Caco-2 (cell line): ENCODE measurements at regions of chr12 and their contacts with region 1.

Region 1: GRCh38 chr12:42568952-42569915 is 20.3 kb downstream of the PRICKLE1 start:
- DNase-seq: peak in 1 of 2 experiments; percentile 56
- H3K4me3 ChIP-seq: no peak overlapping the region
- H3K4me3 Mint-ChIP-seq: no peak overlapping the region
- H3K27ac Mint-ChIP-seq: no peak overlapping the region
- H3K4me1 ChIP-seq: peaks cover 17% of the 10 kb centered on the region
- H3K4me1 Mint-ChIP-seq: peaks cover 7% of the 10 kb centered on the region
- H3K27me3 ChIP-seq: no peaks in the 10 kb centered on the region
- H3K27me3 Mint-ChIP-seq: no peaks in the 10 kb centered on the region
- CTCF ChIP-seq: peak; percentile 47 to 63

Region 2: DNA sequence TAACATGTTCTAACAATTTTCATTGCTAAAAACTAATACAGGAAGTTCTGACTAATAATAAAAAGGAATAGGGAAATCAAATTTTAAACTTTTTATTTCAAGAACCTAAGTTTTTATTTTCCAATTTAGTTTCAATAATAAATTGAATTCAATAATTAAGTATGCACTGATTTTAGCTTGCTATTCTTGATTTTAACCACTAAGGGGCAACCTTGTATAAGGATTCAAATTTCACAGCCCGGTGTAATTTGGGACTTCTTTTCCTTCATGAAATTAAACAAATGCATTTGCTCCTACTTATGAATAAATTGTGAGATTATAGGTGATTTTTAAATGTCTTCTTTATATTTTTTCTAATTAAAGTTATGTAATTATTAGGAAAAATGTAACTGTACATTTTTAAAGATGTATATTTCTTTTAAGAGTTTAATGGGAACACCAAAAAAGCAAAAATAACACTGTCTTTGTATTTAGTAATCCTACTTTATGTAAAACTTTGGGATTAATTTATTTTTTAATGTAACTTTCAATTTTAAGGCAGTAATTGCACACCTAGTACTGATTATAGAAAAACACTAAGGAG is 1622.5 kb before region 1 on chr12:
- CTCF ChIA-PET with region 1: no interaction called
- POLR2A ChIA-PET with region 1: no interaction called
- intact Hi-C with region 1: loop called (anchors 5 kb)
- DNase-seq: no peak
- H3K4me3 ChIP-seq: no peak overlapping the region
- H3K4me3 Mint-ChIP-seq: no peak overlapping the region
- H3K27ac Mint-ChIP-seq: no peak overlapping the region
- H3K4me1 ChIP-seq: no peaks in the 10 kb centered on the region
- H3K4me1 Mint-ChIP-seq: no peaks in the 10 kb centered on the region
- H3K27me3 ChIP-seq: no peaks in the 10 kb centered on the region
- H3K27me3 Mint-ChIP-seq: no peaks in the 10 kb centered on the region
- CTCF ChIP-seq: peak; percentile 46 to 58

Region 3: DNA sequence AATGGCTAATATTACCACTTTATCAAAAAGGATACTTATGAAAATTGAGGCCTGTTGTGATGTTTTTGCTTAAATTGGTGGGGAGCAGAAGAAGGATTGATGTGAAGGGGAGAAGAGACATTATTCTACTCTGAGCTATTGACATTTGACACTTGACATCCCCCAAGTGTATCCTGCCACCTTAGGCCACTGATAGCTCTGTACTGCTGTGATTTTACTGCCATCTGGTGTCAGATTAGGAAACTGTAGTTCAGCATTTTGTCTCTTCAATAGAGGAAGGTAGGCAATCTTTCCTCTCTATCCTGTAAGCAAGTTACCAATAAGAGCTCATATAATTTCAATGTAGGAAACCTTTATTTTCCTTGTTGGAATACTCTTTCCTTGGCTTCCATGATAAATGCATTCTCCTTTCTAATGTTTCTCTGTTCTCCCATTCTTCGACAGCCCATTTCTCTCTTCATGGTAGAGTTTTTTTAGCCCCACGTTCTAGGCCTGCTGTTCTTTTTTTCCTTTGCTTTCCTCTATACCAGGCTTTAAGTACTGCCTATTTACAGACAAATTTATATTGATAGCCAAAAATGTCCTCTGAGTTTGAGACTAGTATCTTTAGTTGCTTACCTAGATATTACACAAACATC is 197.0 kb before region 1 on chr12:
- CTCF ChIA-PET with region 1: no interaction called
- POLR2A ChIA-PET with region 1: no interaction called
- intact Hi-C with region 1: loop called (anchors 1 kb)
- DNase-seq: peak in 1 of 2 experiments; percentile 70
- H3K4me3 ChIP-seq: no peak overlapping the region
- H3K4me3 Mint-ChIP-seq: no peak overlapping the region
- H3K27ac Mint-ChIP-seq: no peak overlapping the region
- H3K4me1 ChIP-seq: no peaks in the 10 kb centered on the region
- H3K4me1 Mint-ChIP-seq: peaks cover 16% of the 10 kb centered on the region
- H3K27me3 ChIP-seq: no peaks in the 10 kb centered on the region
- H3K27me3 Mint-ChIP-seq: no peaks in the 10 kb centered on the region
- CTCF ChIP-seq: peak; percentile 81 to 85

Region 4: GRCh38 chr12:42482445-42483237 is 86.6 kb before region 1 on chr12:
- CTCF ChIA-PET with region 1: interaction called, 58 read pairs
- POLR2A ChIA-PET with region 1: interaction called, 3 read pairs
- intact Hi-C with region 1: loop called (anchors 1 kb)
- DNase-seq: peak; percentile 72 to 90
- H3K4me3 ChIP-seq: peak overlapping the region; percentile 54
- H3K4me3 Mint-ChIP-seq: peak overlapping the region; percentile 92
- H3K27ac Mint-ChIP-seq: no peak overlapping the region
- H3K4me1 ChIP-seq: peaks cover 6% of the 10 kb centered on the region; the same call in 1 of the 2 replicates
- H3K4me1 Mint-ChIP-seq: no peaks in the 10 kb centered on the region
- H3K27me3 ChIP-seq: no peaks in the 10 kb centered on the region
- H3K27me3 Mint-ChIP-seq: no peaks in the 10 kb centered on the region
- CTCF ChIP-seq: peak; percentile 82 to 89

Region 5: DNA sequence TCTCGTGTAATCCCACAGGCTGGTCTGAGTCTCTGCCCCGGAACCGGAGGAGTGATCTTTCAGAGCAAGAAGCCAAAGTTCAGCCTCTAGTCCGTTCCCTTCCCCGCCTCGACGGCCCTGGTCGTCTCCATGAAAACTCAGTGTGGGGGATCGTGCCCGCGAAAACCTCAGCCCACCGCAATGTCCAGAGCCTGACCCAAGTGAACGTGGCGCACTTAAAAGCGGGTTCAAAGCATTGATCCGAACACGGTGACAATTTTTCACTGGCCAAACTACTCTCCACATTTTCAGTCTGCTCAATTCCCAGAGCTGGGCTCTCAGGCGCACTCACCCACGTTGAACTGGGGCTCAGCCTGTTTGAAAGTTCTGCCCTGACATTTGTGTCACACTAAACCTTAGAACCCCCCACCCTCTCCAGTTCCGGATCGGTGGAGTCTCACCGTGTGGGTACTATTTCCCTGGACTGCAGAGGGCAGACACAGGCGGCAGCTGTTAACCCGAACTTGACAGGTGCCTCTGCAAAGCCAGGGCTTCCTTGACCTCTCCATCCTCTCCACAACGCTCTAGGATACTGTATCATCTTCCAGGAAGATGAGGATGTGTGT is 21.2 kb after region 1 on chr12:
- CTCF ChIA-PET with region 1: no interaction called
- POLR2A ChIA-PET with region 1: no interaction called
- intact Hi-C with region 1: no loop called
- DNase-seq: peak; percentile 29 to 46
- H3K4me3 ChIP-seq: peak overlapping the region; percentile 47
- H3K4me3 Mint-ChIP-seq: peak overlapping the region; percentile 74
- H3K27ac Mint-ChIP-seq: no peak overlapping the region
- H3K4me1 ChIP-seq: peaks cover 28% of the 10 kb centered on the region
- H3K4me1 Mint-ChIP-seq: peaks cover 26% of the 10 kb centered on the region
- H3K27me3 ChIP-seq: peaks cover 9% of the 10 kb centered on the region
- H3K27me3 Mint-ChIP-seq: peaks cover 4% of the 10 kb centered on the region
- CTCF ChIP-seq: no peak

Region 6: DNA sequence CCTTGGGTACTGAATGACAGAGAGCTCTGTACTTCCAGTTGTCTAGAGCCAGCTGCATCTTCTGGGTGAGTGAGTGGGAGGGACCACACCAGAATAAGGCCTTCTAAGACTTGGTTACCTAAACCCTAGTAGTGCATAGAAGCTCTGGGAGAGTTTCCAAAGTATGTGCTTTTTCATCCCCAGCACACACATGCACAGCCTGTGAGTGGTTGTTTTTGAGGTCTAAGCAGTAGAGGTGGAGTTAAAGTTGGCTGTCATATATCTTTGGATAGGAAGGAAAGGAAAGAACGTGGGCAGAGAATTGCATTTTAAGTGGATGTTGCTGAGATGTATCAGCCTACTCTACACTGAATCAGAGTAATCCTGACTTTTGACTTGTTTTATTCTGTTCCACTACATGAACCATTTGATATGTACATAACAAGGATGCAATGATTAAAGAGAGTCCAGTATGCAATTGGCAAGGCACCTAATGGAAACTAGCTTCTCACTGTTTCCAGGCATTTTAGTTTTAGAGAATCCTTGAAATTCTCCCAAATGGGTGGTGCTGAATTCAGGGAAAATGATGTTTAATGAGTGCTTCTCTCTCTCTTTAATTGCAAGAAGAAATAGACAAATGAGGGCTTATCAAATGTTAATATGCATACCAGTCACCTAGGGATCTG is 72.1 kb after region 1 on chr12:
- CTCF ChIA-PET with region 1: no interaction called
- POLR2A ChIA-PET with region 1: no interaction called
- intact Hi-C with region 1: no loop called
- DNase-seq: no peak
- H3K4me3 ChIP-seq: no peak overlapping the region
- H3K4me3 Mint-ChIP-seq: no peak overlapping the region
- H3K27ac Mint-ChIP-seq: no peak overlapping the region
- H3K4me1 ChIP-seq: peaks cover 12% of the 10 kb centered on the region
- H3K4me1 Mint-ChIP-seq: no peaks in the 10 kb centered on the region
- H3K27me3 ChIP-seq: no peaks in the 10 kb centered on the region
- H3K27me3 Mint-ChIP-seq: no peaks in the 10 kb centered on the region
- CTCF ChIP-seq: no peak

Region 7: DNA sequence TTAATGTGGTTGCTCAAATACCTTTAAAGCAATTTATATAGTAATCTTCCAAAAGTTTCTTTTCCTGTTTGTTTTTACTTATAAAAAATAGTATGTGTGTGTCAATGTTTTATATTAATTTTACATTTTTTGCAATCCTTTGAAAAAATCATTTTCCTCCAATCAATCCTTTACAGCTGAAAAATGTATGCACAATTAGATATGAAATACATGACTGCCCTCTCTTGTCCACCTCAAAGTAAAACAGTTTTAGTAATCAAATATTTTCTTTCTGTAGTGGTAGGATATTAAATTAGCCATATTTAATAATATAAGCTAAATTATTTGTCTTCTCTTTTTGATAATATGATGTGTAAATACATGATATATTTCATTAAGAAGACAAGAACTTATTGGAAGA is 712.9 kb after region 1 on chr12:
- CTCF ChIA-PET with region 1: no interaction called
- POLR2A ChIA-PET with region 1: no interaction called
- intact Hi-C with region 1: loop called (anchors 5 kb)
- DNase-seq: no peak
- H3K4me3 ChIP-seq: no peak overlapping the region
- H3K4me3 Mint-ChIP-seq: no peak overlapping the region
- H3K27ac Mint-ChIP-seq: no peak overlapping the region
- H3K4me1 ChIP-seq: no peaks in the 10 kb centered on the region
- H3K4me1 Mint-ChIP-seq: peaks cover 10% of the 10 kb centered on the region
- H3K27me3 ChIP-seq: no peaks in the 10 kb centered on the region
- H3K27me3 Mint-ChIP-seq: no peaks in the 10 kb centered on the region
- CTCF ChIP-seq: no peak

Region 8: DNA sequence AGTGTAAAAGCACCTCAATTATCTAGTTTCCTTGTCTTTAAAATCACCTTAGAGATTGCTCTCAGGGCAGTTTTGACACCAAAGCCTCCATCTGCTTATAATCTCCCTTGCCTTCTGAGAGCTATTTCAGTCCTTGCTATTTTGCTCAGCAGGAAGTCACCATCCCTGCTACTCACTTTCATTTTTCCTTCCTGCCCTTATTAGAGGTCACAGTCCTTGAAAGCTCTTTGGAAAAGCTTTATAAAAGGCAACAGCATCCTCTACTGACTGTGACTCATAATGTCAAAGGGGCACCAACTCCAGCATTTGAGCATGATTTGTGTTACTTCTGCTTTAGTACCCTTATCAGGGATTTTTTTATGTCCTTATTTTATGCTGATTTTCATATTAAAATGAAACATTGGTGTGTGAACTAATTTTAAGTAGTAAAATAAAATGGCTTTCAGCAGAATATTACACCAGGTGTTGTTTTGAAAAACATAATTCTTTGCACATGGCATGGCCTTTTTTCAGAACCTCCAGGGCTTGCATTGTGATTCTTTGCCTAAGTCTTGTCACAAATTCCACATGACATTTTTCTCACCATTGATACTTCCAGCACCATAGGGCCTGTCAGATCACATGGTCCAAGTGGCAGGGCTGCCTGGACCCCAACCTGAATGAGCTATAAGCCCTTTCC is 769.8 kb after region 1 on chr12:
- CTCF ChIA-PET with region 1: no interaction called
- POLR2A ChIA-PET with region 1: no interaction called
- intact Hi-C with region 1: loop called (anchors 5 kb)
- DNase-seq: peak in 1 of 2 experiments; percentile 20
- H3K4me3 ChIP-seq: no peak overlapping the region
- H3K4me3 Mint-ChIP-seq: no peak overlapping the region
- H3K27ac Mint-ChIP-seq: no peak overlapping the region
- H3K4me1 ChIP-seq: no peaks in the 10 kb centered on the region
- H3K4me1 Mint-ChIP-seq: no peaks in the 10 kb centered on the region
- H3K27me3 ChIP-seq: no peaks in the 10 kb centered on the region
- H3K27me3 Mint-ChIP-seq: no peaks in the 10 kb centered on the region
- CTCF ChIP-seq: peak in 1 of 2 experiments; percentile 69